ENCODE measurements at regions of chr14 and their contacts with region 1.

Region 1: GRCh38 chr14:24678801-24679247 is 44.8 kb upstream of the GZMB start:
- DNase-seq: peak; percentile 92 to 95 (median 94)
- H3K4me3 ChIP-seq: peak overlapping the region in 5 of 7 experiments; percentile 29 to 71 (median 50)
- H3K27ac ChIP-seq: no peak overlapping the region
- H3K4me1 ChIP-seq: peaks cover 21 to 38% (median 25%) of the 10 kb centered on the region in 4 experiments
- H3K27me3 ChIP-seq: no peaks in the 10 kb centered on the region

Region 2: DNA sequence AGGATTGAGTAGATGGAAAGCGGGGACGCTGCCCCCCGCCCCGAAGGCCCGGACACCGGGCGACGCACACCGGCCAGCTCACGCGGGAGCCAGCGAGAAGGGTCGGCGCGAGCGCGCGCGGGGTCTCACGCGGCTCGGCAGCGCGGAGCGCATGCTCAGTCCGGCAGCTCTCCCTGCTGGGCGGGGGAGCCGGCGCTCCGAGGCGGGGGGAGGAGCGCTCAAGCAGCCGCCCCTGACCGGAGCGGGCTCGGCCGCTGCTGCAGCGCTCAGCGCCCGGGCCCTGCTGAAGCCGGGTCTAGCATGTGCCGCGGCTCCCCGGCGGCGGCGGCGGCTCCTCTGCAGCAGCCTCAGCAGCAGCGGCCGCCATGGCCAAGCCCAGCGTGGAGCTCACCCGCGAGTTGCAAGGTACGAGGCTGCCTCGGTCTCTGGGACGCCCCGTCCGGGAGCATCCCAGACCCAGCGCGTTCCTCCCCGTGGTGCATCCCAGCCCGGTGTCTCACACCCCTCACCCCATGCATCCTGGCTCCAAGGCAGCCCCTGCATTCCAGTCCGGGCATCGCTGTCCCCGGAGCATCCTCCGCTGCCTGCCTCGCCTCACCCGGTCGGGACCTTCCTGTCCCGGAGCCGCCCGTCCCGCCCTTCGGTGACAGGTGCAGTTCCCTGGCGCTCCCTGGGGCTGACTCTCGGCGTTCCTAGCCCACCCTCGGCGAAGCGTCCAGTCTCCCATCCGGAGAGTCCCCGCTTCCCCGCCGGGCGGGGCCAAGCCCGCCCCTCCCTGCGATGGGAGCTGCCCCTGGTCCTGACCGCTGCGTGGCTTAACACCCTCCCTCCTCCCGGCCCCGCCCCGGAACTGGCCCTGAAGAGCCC is 626.8 kb before region 1 on chr14 and contains the start of gene CARMIL3:
- CTCF ChIA-PET with region 1: no interaction called
- POLR2A ChIA-PET with region 1: no interaction called
- DNase-seq: peak; percentile 40 to 59 (median 51)
- H3K4me3 ChIP-seq: peak within 1 kb of the TSS; percentile 38 to 86 (median 67)
- H3K27ac ChIP-seq: peak within 1 kb of the TSS in 1 of 2 experiments; percentile 54
- H3K4me1 ChIP-seq: peaks cover 0 to 20% (median 17%) of the 10 kb centered on the region in 4 experiments
- H3K27me3 ChIP-seq: peaks cover 0 to 15% (median 9%) of the 10 kb centered on the region in 5 experiments

Region 3: DNA sequence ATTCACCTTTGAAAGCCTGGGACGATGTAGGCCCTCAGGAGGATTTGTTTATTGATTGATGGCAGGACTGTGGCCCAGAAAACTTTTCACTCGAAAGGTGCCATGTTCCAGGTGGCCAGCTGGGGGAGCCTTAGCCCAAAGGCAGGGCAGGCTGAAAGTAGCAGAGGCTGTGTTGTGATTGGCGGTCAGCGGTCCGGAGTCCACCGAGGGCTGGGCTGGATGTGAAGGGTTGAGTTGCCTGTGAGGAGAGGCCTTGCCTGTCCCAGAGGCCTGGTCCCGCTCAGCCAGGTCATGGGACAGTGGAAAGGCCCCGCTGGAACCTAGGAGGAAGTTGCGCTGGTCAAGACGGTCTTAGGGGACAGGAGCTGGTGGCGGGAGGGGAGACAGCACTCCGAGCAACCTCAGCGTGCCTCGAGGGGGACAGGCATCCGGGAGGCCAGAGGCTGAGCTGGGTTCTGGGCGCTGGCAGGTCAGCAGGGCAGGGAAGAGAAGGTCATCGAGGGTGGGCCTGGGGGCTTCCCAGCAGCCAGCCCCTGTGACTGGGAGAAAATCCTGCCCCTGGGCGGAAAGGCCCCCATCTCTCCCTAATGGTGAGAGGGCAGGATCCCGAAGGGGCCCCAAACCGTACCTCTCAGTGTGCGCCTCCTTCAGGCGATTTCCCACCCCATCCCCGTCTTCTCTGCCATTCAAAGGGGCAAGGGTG is 197.1 kb before region 1 on chr14:
- CTCF ChIA-PET with region 1: interaction called, 18 read pairs
- POLR2A ChIA-PET with region 1: no interaction called
- DNase-seq: peak; percentile 24 to 54 (median 48)
- H3K4me3 ChIP-seq: peak overlapping the region in 3 of 7 experiments; percentile 36 to 68 (median 44)
- H3K27ac ChIP-seq: no peak overlapping the region
- H3K4me1 ChIP-seq: peaks cover 17 to 31% (median 26%) of the 10 kb centered on the region in 4 experiments
- H3K27me3 ChIP-seq: no peaks in the 10 kb centered on the region

Region 4: DNA sequence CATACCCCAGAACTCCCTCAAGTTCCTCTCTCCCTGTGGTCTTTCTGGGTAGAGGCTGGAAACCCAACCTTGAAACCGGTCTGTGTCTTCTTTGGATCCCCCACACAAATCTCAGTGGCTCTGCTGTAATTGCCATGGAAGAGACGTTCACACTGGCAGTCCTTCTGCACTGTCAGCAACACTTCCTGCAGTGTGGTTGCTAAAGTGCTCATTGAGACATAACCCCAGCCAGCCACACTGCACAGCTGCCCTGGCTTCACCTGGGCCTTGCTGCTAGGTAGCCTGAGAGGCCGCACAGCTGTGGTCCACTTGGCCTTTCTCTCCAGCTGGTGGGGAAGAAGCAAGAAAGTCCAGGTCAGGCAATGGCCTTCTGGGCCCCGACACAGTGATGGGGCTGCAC is 71.7 kb before region 1 on chr14:
- CTCF ChIA-PET with region 1: interaction called, 10 read pairs
- POLR2A ChIA-PET with region 1: no interaction called
- DNase-seq: no peak
- H3K4me3 ChIP-seq: no peak overlapping the region
- H3K27ac ChIP-seq: no peak overlapping the region
- H3K4me1 ChIP-seq: peaks cover 3 to 23% (median 6%) of the 10 kb centered on the region in 4 experiments
- H3K27me3 ChIP-seq: no peaks in the 10 kb centered on the region

Region 5: DNA sequence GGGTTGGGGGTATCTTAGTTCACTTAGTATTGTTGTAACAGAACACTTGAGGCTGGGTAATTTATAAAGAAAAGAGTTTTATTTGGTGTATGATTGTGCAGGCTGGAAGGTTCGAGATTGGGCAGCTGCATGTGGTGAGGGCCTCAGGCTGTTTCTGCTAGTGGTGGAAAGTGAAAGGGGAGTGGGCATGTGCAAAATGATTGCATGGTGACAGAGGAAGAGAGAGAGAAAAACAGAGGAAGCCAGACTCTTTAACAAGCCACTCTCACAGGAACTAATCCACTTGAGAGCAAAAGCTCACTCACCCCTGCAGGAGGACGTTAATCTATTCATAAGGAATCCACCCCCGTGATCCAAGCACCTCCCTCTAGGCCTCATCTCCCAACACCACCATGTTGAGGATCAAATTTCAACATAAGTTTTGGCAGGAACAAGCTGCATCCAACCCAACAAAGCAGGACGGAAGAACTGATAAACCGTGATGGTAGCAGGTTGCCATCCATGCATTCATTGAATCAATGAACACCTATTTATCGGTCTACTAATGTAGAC is 120.2 kb after region 1 on chr14:
- CTCF ChIA-PET with region 1: no interaction called
- POLR2A ChIA-PET with region 1: no interaction called
- DNase-seq: peak in 2 of 3 donors; percentile 6 to 9
- H3K4me3 ChIP-seq: no peak overlapping the region
- H3K27ac ChIP-seq: no peak overlapping the region
- H3K4me1 ChIP-seq: peaks cover 0 to 6% (median 2%) of the 10 kb centered on the region in 4 experiments
- H3K27me3 ChIP-seq: no peaks in the 10 kb centered on the region

Measured in common myeloid progenitor, CD34-positive (primary cell).